Mammary epithelial cell (primary cell): ENCODE measurements at regions of chr3 and their contacts with region 1.

Region 1: DNA sequence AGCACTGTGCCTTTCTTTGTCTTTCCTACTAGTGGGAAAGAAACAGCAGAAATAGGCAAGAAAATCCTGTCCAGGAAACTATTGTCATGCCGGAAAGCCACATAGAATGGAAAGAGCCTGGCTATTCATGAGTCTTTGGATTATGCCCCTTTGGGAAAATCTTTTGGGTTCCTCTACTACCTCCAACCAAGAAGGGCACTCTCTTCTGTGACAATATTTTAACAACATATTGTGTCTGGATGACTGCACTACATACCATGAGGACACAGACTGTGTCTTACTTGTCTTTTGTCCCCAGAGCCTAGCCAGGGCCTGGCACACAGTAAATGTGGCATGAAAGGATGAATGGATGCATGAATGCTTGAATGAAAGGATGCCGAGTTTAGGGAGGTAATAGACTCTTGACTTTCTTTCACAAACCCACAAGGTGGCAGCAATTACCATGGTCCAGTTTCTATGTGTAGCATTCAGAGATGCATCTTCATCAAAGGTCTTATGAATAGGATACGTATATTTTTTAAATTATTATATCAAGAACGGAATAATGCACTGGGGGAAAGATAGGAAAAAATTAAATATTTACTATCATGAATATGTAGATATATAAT is 30.3 kb downstream of the ARL14 start:
- DNase-seq: peak; percentile 36
- H3K4me3 ChIP-seq: no peak overlapping the region
- H3K27ac ChIP-seq: no peak overlapping the region
- H3K4me1 ChIP-seq: no peaks in the 10 kb centered on the region
- H3K27me3 ChIP-seq: peaks cover 9% of the 10 kb centered on the region
- CTCF ChIP-seq: peak; percentile 37 to 68

Region 2: DNA sequence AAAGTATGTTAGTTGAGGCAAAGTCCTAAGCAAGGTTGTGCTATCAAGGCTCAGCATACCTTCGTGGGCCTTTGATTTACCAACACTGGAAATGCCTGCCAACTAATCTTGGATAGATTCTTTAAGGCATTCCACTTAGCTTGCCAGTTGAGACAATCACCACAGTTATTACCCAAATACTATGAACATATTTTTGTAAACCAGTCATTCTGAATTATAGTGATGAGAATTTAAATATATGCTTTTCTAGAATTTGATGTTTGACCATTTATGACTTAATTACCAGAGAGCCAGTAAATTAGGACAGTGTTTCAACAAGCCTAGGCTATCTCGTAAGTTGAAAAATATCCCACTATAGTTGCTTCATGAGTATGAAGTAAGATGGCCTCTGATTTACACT is 273.2 kb before region 1 on chr3:
- CTCF ChIA-PET with region 1: no interaction called
- dilution Hi-C with region 1: no loop called
- in situ Hi-C with region 1: no loop called
- intact Hi-C with region 1: no loop called
- DNase-seq: peak; percentile 33
- H3K4me3 ChIP-seq: no peak overlapping the region
- H3K27ac ChIP-seq: no peak overlapping the region
- H3K4me1 ChIP-seq: no peaks in the 10 kb centered on the region
- H3K27me3 ChIP-seq: no peaks in the 10 kb centered on the region
- CTCF ChIP-seq: no peak

Region 3: DNA sequence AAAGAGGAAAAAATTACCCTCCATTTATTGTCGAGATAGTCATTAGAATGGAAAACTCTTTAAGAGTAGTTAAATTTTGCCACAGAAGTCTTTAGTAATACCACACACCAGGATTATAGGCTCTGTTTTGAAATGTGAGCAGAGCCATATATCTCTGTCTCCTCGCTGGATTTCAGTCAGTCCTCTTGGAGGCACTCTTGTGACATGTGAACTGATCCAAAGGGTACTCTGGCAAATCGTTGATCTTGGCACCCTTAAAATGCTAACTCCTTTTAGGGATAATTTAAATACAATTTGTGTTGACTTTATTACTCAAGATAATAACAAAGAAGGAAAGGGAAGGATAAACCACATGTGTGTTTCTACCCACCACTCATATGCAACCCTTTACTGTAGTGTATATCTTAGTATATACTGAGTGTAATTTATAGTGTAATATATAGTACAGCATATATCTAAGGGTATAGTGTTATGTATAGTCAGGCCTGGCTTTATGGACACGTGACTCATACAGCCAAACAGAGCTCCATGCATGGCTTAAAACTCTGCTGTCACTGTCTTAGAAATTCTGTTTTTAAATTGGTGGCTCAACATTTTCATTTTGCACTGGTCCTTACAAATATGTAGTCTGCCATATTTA is 129.6 kb before region 1 on chr3:
- CTCF ChIA-PET with region 1: no interaction called
- dilution Hi-C with region 1: no loop called
- in situ Hi-C with region 1: no loop called
- intact Hi-C with region 1: loop called (anchors 5 kb)
- DNase-seq: peak; percentile 38
- H3K4me3 ChIP-seq: no peak overlapping the region
- H3K27ac ChIP-seq: no peak overlapping the region
- H3K4me1 ChIP-seq: no peaks in the 10 kb centered on the region
- H3K27me3 ChIP-seq: no peaks in the 10 kb centered on the region
- CTCF ChIP-seq: peak; percentile 40 to 43

Region 4: GRCh38 chr3:160929595-160929994 is 222.3 kb after region 1 on chr3:
- CTCF ChIA-PET with region 1: no interaction called
- dilution Hi-C with region 1: no loop called
- in situ Hi-C with region 1: loop called (anchors 10 kb)
- intact Hi-C with region 1: loop called (anchors 5 kb)
- DNase-seq: no peak
- H3K4me3 ChIP-seq: no peak overlapping the region
- H3K27ac ChIP-seq: no peak overlapping the region
- H3K4me1 ChIP-seq: no peaks in the 10 kb centered on the region
- H3K27me3 ChIP-seq: peaks cover 6% of the 10 kb centered on the region
- CTCF ChIP-seq: peak in 1 of 2 donors; percentile 24

Region 5: GRCh38 chr3:160941885-160942494 is 234.7 kb after region 1 on chr3:
- CTCF ChIA-PET with region 1: no interaction called
- dilution Hi-C with region 1: no loop called
- in situ Hi-C with region 1: loop called (anchors 10 kb)
- intact Hi-C with region 1: loop called (anchors 1 kb)
- DNase-seq: peak; percentile 45
- H3K4me3 ChIP-seq: no peak overlapping the region
- H3K27ac ChIP-seq: no peak overlapping the region
- H3K4me1 ChIP-seq: no peaks in the 10 kb centered on the region
- H3K27me3 ChIP-seq: no peaks in the 10 kb centered on the region
- CTCF ChIP-seq: peak; percentile 81 to 82

Region 6: GRCh38 chr3:161274719-161275298 is 567.5 kb after region 1 on chr3:
- CTCF ChIA-PET with region 1: no interaction called
- dilution Hi-C with region 1: no loop called
- in situ Hi-C with region 1: no loop called
- intact Hi-C with region 1: loop called (anchors 10 kb)
- DNase-seq: peak; percentile 55
- H3K4me3 ChIP-seq: no peak overlapping the region
- H3K27ac ChIP-seq: no peak overlapping the region
- H3K4me1 ChIP-seq: peaks cover 5% of the 10 kb centered on the region
- H3K27me3 ChIP-seq: no peaks in the 10 kb centered on the region
- CTCF ChIP-seq: peak; percentile 66 to 80

Region 7: DNA sequence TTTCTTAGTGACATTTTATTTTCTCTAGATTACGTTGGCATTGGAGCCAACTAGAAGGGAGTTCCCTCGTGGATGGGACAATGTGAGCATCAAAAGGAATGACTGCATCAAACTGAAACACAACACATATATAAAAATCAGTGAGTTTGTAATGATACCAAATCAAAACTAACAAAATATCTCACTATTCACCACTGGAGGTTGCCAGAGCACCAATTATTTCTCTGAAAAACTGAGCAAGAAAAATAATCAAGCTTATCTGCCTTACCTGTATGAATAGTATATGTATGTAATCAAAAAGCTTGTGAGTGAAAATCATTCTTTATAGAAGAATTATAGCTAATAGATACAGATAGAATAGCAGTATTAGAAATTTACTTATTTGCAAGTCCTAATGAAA is 742.5 kb after region 1 on chr3:
- CTCF ChIA-PET with region 1: no interaction called
- dilution Hi-C with region 1: no loop called
- in situ Hi-C with region 1: loop called in 1 of 2 experiments (anchors 25 kb)
- intact Hi-C with region 1: no loop called
- DNase-seq: no peak
- H3K4me3 ChIP-seq: no peak overlapping the region
- H3K27ac ChIP-seq: no peak overlapping the region
- H3K4me1 ChIP-seq: no peaks in the 10 kb centered on the region
- H3K27me3 ChIP-seq: no peaks in the 10 kb centered on the region
- CTCF ChIP-seq: peak in 1 of 2 donors; percentile 13